Posterior cingulate gyrus (tissue), 11 donors: ENCODE measurements at regions of chr19 and their contacts with region 1.

Region 1: DNA sequence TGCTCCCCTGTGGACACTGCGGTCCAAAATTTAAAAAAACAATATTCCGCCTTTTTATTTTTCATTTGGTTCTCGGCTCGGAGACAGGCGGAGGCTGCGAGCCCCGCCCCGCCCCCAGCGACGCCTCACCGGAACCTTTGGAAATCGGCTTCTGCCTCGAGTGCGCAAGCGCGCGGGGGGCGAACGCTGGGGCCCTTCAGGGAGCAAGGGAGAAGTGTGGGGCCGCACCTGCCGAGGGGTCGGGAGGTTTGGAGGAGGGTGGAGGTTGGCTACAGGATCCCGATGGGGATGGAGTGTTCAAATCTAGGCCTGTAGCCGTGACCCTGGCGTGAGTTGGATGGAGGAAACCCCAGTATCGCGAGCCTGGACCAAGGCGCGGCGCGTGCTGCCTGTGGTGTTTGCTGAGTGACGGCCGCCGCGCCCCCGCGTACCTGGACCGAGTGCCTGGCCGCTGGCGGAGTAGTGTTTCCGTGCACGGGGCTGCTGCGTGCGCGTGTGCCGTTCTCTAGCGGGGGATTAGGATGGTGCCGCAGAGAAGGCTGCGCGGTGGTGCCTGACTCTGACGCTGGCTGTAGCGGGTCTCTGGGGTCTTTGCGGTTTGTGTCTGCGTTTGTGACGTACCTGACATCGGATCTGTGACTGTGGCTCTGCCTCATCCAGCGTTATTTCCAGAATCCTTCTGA is 565 bp upstream of the ZFP30 start:
- DNase-seq: peak; percentile 76 to 98 (median 86)

Region 2: DNA sequence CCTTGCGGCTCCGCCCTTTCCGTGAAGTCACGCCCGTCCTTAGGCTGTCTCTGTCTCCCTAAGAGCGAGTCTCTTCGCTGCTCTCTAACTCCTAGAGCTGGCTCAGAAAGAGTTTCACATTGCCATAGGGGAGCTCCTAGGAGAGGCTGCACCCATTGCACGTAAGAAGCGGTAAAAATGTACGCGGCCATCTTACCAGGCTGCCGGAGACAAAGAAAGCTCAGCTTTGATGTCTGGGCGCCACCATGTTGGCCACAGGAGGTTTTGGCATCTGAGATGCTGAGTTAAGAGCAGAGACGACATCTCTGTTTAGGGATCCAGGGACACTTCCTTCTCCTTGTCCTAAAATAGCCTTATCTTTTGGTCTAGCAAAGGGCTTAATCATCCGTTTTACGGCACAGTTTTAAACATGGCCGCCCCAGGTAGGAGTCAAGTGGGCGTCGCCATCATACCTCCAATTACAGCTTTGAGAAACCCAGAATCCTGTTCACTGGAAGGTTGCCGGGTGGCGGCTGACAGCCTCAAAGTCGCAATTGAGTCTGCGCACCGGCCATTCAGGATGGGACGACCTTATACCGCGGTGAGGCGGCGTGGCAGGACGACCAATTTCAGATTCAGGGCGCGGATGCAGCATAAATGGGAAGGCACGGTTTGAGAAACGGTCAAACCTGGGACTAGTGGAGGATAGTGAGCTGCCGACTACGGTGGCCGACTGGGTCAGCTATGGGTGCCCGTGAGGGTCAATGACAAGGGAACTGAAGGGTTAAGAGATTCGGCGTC is 149.3 kb before region 1 on chr19 and contains the start of gene ZNF793:
- intact Hi-C with region 1: loop called (anchors 10 kb)
- DNase-seq: peak; percentile 71 to 96 (median 80)

Region 3: GRCh38 chr19:37537391-37537947 is 118.4 kb before region 1 on chr19:
- intact Hi-C with region 1: no loop called
- DNase-seq: no peak

Region 4: DNA sequence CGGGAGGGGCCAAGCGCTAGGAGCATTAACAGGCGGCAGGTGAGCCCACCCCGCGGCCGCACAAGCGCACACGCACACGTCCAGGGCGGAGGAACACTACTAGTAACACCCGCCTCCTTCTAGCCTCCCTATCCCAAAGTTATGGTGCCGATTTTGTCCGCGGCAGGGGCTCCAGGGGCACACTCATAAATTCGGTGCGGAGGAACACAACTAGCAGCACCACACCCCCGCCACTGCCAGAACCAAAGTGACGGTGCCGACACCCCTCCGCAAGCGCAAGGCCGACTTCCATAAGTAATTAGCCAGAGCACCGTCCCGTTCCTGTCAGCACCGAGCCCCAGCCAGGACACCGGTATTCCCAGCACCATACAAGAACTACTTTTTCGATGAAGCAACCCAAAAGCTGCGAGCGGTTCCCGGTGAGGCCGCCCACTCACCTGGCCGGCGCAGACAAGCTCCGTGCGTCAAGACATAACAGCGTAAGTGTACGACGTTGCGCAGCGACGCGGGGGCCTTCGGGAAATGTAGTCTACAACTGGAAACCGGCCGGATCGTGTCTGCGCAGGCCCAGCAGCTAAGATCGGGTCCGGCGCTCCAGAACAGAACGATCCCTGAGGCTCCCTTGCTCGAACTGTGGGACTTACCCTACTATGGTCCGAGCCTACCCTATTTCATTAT is 61.4 kb before region 1 on chr19 and contains the starts of genes ZNF540 and ZNF571:
- intact Hi-C with region 1: loop called (anchors 2 kb)
- DNase-seq: peak; percentile 89 to 99 (median 94)

Region 5: GRCh38 chr19:37691881-37692504 is 36.2 kb after region 1 on chr19:
- intact Hi-C with region 1: loop called (anchors 2 kb)
- DNase-seq: peak; percentile 84 to 98 (median 88)

Region 6: GRCh38 chr19:37706052-37706605 is 50.3 kb after region 1 on chr19:
- intact Hi-C with region 1: no loop called
- DNase-seq: no peak

Region 7: DNA sequence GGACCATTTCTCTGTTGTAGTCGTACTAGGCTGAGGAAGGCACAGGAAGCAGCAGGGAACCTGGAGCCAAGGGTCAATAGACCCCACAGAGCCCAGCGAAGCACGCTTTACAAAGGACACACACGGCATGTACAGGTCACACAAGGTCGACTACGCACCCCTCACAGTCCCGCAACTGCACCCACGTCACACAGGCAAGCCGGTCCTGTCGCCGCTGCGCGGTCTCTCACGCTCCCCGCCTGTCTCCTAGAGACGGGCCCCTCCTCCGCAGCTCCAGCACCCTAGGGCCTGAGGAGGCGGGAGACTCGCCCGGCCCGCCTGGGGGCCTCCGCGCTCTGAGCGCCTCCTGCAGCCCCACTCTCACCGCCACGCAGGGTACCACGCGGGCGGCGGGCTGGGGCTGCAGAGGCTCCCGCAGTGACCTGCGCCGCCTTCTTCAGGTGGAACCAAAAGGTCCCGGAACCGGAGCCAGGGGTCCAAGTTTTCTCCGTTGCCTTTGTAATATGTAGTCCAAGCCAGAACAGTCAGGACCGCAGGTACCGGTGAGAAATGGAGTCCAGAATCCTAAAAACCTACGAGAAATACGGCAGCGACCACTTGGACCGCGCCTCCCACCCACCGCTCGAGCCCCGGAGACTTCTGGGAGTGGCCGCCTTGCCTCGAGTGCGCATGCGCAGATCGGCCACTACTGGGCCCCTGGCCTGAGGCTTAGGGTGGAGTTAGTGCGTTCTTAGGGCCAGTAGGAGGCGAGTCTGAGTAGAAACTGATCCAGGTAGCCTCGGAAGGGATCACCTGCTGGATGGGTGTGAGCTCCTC is 63.5 kb after region 1 on chr19 and contains the start of gene ZNF607:
- intact Hi-C with region 1: loop called (anchors 2 kb)
- DNase-seq: peak; percentile 85 to 98 (median 90)

Region 8: GRCh38 chr19:37779127-37780005 is 123.5 kb after region 1 on chr19 and contains the start of gene ZNF573:
- intact Hi-C with region 1: loop called (anchors 1 kb)
- DNase-seq: peak; percentile 76 to 97 (median 88)